Head of caudate nucleus (tissue), 42 donors: ENCODE measurements at regions of chr20 and their contacts with region 1.

Region 1: GRCh38 chr20:51695574-51696303 is 72.5 kb downstream of the ATP9A start:
- DNase-seq: peak in 1 of 42 donors; percentile 13

Region 2: GRCh38 chr20:51750037-51750763 is 54.5 kb after region 1 on chr20:
- intact Hi-C with region 1: no loop called
- DNase-seq: peak in 39 of 42 donors; percentile 48 to 91 (median 68)

Region 3: GRCh38 chr20:51767010-51767558 is 71.3 kb after region 1 on chr20:
- intact Hi-C with region 1: loop called (anchors 10 kb)
- DNase-seq: peak; percentile 57 to 95 (median 86)